ENCODE measurements at regions of chr15 and their contacts with region 1.

Region 1: GRCh38 chr15:74799856-74800547 is 12.6 kb upstream of the LMAN1L start:
- DNase-seq: no peak
- H3K4me3 ChIP-seq: no peak overlapping the region
- H3K27ac ChIP-seq: peak overlapping the region; percentile 83 to 92 (median 84)
- H3K4me1 ChIP-seq: peaks cover 24 to 58% (median 29%) of the 10 kb centered on the region in 3 donors
- H3K27me3 ChIP-seq: no peaks in the 10 kb centered on the region
- CTCF ChIP-seq: peak; percentile 98 to 99 (median 99)
- POLR2A ChIP-seq: no peak

Region 2: GRCh38 chr15:74752491-74753020 is 47.4 kb before region 1 on chr15:
- intact Hi-C with region 1: no loop called
- DNase-seq: no peak
- H3K4me3 ChIP-seq: no peak overlapping the region
- H3K27ac ChIP-seq: no peak overlapping the region
- H3K4me1 ChIP-seq: no peaks in the 10 kb centered on the region
- H3K27me3 ChIP-seq: no peaks in the 10 kb centered on the region
- CTCF ChIP-seq: no peak
- POLR2A ChIP-seq: no peak

Region 3: DNA sequence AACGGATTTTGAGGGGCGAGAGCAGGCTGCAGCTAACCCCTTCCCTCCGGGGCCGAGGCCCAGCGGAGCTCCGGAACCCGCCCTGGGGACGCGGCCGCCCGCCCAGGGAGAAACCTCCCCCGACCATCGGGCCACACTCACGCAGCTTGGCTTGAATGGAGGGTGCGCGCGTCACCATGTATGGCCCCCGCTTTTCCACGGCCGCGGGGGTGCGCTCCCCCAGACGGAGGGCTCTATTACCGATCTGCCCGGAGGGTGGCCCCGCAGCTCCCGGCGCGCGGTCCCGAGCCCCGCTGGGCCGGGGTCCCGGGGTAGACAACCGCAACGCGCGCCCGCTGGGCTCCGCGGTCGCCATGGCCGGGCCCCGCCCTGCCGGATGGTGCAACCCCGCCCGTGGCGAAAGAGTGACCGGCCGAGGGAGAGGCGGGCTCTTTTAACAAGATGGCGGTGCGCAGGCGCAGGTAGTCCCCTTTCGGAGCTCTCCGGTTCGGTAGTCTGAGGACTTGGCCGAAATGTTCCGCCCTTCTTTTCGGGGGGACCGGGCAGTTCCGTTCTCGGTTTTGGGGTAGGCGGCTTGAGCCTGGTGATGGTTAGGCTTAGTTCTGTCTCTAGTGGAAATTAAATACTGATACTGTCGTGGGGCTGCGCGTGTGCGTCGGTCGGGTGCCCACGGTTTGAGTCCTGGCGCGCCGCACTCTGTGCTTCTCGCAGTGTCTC is 106.6 kb after region 1 on chr15 and contains the start of gene FAM219B:
- intact Hi-C with region 1: loop called (anchors 10 kb)
- DNase-seq: peak; percentile 52
- H3K4me3 ChIP-seq: peak within 1 kb of the TSS; percentile 68 to 99 (median 98)
- H3K27ac ChIP-seq: peak within 1 kb of the TSS; percentile 93 to 99 (median 98)
- H3K4me1 ChIP-seq: peaks cover 15 to 51% (median 22%) of the 10 kb centered on the region in 3 donors
- H3K27me3 ChIP-seq: no peaks in the 10 kb centered on the region
- CTCF ChIP-seq: peak in 3 of 6 experiments; percentile 3 to 13 (median 6)
- POLR2A ChIP-seq: peak in 3 of 4 donors; percentile 41 to 89 (median 75)
- total RNA-seq, gene FAM219B: 29.3 to 71.8 (median 45.4) TPM

Region 4: GRCh38 chr15:75591655-75592364 is 791.8 kb after region 1 on chr15:
- intact Hi-C with region 1: no loop called
- DNase-seq: no peak
- H3K4me3 ChIP-seq: no peak overlapping the region
- H3K27ac ChIP-seq: no peak overlapping the region
- H3K4me1 ChIP-seq: no peaks in the 10 kb centered on the region
- H3K27me3 ChIP-seq: no peaks in the 10 kb centered on the region
- CTCF ChIP-seq: no peak
- POLR2A ChIP-seq: no peak